Cardiac septum (tissue), 1 donor: ENCODE measurements at regions of chr5 and their contacts with region 1.

Region 1: DNA sequence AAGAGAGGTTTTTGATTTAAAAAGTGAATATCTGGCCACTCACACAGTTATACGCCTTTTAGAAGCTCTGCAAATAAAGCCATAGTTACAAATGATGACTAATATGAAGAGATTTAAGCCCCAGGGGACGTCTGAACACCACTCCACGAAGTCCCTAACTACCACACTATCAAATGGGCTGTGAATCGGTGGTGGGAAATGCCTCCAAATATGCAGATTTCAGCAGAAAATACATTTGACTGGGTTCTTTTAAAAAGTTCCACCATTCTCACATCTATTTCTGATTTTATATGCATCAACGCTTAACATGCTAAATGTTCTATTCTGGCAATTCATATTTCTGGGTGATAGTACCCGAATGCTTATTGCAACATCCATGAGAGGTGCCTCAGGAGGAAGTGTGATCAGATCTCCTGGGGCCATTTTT is 22.5 kb downstream of the TICAM2 start:
- DNase-seq: no peak

Region 2: GRCh38 chr5:115087951-115088350 is 491.8 kb before region 1 on chr5:
- intact Hi-C with region 1: loop called (anchors 5 kb)
- DNase-seq: no peak

Region 3: DNA sequence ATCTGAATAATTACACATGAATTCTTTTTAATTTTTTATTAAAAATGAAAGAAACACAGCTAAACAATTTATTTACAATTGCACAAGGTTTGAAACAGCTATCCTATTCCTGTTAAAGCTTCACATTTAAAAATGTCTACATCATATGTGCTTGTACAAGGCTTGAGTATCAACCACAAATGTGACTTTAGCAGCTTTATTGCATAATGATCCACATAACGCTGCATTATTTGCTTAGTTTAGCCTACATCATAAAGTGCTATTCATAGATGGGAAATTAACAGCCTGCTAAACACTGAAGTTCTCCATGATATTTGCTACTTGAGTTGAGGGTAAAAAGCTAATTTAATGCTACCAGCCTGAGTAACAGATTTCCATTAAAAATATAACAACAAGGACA is 455.0 kb before region 1 on chr5:
- intact Hi-C with region 1: no loop called
- DNase-seq: no peak

Region 4: DNA sequence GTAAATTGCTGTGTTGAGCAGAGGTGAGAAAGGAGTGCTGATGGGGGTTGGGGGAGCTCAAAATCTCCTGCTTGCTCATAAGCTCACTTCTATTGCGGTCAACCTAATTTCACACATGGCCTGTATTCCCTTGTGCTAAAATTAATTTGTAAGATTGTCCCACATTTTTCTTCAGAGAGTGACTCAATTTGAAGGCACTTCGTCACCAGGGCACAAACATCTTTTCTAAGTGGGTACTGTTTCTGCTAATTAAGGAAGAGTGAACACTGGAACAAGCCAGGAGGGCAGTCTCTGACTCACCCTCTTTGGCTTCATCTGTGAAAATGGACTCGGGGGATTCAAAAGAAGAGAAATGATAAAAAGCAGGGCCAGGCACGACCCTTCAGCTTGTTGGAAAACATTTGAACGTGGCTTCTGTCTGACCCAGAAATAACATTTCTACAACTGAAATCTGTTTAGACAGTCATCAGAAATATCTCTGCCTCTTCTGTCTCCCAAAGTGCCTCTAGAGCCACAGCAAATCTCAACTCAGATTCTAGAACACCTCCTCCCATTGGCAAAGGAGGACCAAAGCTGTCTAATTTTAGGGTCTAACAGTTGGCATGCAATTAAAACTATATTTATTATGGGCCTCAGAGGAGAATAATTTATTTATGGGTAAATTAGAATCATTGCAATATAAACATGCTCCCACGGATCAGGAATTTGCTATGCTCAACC is 85.0 kb before region 1 on chr5:
- intact Hi-C with region 1: no loop called
- DNase-seq: no peak